Kidney (tissue), 22 donors: ENCODE measurements at regions of chr4 and their contacts with region 1.

Region 1: DNA sequence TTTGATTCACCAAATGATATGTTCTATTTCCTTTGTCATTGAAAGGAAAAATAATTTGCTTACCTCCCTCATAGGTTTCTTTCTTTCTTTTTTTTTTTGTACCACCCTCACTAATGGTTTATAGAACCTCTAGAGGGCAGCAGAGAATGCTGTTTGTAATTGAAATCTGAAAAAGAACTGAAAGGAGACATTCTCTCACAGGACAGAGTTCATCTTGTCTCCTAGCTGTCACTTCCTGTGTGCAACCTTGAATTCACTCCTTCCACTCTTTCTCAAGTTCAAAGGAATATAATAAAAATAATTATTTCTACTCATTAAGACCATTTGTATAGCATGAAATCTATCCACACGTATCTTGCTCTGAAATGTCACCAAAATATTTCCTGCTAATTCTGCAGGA is 51.0 kb downstream of the GUCY1B1 start:
- DNase-seq: peak in 2 of 5 donors; percentile 86 to 90
- H3K4me3 ChIP-seq: no peak overlapping the region
- H3K27ac ChIP-seq: no peak overlapping the region
- H3K4me1 ChIP-seq: no peaks in the 10 kb centered on the region
- H3K27me3 ChIP-seq: no peaks in the 10 kb centered on the region
- CTCF ChIP-seq: peak; percentile 65

Region 2: DNA sequence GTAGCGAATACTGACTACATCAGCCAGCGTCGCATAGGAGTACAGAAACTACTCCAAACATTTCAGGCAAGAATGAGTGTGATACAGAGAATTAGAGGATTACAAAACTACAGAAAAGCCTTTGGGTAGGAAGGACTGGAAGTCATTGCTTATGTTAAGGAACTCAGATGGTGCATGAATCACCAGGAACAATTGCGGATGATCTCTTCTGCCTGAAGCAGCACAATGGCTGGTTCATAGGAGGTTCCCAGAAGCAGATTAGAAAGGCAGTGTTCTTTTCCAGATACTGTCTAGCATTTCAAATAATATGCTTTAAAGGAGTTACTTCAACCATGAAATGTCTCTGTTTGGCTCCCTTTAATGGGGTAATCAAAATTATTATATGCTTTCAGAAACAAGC is 390.6 kb before region 1 on chr4:
- intact Hi-C with region 1: no loop called
- DNase-seq: no peak
- H3K4me3 ChIP-seq: no peak overlapping the region
- H3K27ac ChIP-seq: no peak overlapping the region
- H3K4me1 ChIP-seq: no peaks in the 10 kb centered on the region
- H3K27me3 ChIP-seq: no peaks in the 10 kb centered on the region
- CTCF ChIP-seq: no peak

Region 3: DNA sequence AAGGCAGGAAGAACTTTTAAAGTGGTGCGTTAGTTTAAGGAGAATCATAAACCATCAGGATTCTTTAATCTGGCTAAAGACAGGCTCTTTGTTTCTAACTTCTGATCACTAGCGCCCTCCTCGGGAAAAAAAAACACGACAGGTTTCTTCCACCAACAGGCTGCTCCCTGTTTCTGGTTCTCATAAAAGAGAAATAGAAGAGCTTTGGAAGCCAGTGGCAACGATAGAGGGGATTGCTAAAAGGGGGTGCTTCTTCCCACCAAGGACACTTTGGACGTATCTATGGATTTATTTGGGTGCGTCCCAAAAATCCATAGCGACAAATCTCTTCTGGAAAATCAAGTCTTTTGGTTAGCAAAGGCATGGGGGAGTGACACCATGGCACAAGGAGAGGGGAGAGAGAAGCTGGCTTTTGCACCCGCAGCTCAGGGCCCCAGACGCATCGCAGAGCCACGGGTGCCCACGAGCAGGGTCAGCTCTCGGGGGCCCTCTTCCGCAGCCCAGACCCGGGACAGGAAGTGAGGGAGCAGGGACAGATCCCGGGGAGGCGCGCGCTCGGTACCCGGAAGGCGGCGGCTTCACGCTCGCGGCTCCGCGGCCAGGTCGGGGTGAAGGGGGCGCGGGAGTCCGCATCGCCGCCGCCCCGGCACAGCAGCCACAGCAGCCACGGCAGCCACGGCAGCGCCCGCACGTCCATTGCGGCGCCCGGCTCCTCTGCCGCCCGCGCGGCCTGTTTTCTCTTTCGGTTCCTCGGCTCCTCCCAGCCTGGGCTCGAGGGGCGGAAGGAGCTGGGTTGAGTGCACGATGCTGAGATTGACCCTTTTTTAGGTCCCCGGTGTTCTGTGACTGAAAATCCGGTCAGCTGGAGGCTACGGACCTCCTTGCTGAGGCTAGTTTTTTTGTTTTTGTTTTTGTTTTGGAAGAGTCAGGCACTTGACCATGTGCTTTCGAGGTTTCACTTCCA is 143.6 kb after region 1 on chr4 and contains the start of gene CTSO:
- intact Hi-C with region 1: loop called (anchors 5 kb)
- DNase-seq: peak; percentile 82 to 95 (median 91)
- H3K4me3 ChIP-seq: peak within 1 kb of the TSS; percentile 90 to 98 (median 93)
- H3K27ac ChIP-seq: peak within 1 kb of the TSS; percentile 95 to 99
- H3K4me1 ChIP-seq: no peaks in the 10 kb centered on the region
- H3K27me3 ChIP-seq: no peaks in the 10 kb centered on the region
- CTCF ChIP-seq: peak; percentile 54
- total RNA-seq, gene CTSO: 40.3 TPM

Region 4: DNA sequence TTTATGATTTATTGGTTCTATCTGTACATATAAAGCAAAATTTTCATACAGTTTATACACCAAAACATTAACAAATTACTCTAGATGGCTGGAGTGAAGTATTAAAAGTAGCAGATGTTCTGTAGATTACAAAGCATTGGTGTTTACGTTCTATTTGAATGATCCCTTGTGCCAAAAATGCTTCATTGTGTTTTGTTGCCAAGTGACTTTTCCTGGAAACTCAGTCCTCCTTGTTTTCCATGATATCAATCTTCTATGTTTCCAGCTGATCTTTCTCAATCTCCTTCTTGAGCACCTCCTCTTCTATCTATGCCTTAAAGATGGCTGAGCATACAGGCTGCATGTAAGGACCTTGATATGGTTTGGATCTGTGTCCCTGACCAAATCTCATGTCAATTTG is 407.4 kb after region 1 on chr4:
- intact Hi-C with region 1: no loop called
- DNase-seq: peak in 1 of 5 donors; percentile 28
- H3K4me3 ChIP-seq: no peak overlapping the region
- H3K27ac ChIP-seq: no peak overlapping the region
- H3K4me1 ChIP-seq: no peaks in the 10 kb centered on the region
- H3K27me3 ChIP-seq: no peaks in the 10 kb centered on the region
- CTCF ChIP-seq: no peak